MCF 10A (cell line): ENCODE measurements at regions of chr15 and their contacts with region 1.

Region 1: DNA sequence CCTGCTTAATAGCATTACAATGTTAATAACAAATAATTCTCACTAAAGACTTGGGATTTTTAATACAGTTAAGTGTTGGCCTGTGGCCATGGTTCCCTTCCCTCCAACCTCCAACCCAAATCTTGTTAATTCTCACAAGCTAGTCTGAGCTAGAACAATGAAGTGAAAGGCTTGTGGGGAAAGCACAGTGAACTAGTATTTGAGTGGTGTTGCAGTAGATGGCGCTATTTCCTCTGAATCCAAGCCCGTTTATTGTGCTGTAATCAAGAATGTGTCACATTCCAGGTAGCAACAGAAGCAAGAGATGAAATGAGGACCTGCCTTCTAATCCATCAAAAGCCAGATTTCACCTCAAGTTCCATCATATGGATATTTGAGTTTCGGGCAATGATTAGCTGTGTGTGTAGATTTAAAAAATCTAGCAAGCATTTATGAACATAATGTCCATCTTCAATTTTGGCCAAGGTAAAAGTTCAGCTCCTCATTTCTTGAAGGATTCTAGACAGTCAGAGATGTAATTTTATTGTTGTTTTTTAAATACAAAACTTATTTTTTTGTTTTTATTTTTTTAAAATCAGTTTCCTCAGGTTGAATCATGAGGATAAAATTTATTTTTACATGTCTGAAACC is 160.7 kb downstream of the SQOR start:
- DNase-seq: peak; percentile 70
- H3K4me3 Mint-ChIP-seq: no peak overlapping the region
- H3K27ac Mint-ChIP-seq: no peak overlapping the region
- H3K4me1 Mint-ChIP-seq: peaks cover 5% of the 10 kb centered on the region
- H3K27me3 Mint-ChIP-seq: peaks cover 27% of the 10 kb centered on the region
- CTCF ChIP-seq: peak; percentile 67

Region 2: DNA sequence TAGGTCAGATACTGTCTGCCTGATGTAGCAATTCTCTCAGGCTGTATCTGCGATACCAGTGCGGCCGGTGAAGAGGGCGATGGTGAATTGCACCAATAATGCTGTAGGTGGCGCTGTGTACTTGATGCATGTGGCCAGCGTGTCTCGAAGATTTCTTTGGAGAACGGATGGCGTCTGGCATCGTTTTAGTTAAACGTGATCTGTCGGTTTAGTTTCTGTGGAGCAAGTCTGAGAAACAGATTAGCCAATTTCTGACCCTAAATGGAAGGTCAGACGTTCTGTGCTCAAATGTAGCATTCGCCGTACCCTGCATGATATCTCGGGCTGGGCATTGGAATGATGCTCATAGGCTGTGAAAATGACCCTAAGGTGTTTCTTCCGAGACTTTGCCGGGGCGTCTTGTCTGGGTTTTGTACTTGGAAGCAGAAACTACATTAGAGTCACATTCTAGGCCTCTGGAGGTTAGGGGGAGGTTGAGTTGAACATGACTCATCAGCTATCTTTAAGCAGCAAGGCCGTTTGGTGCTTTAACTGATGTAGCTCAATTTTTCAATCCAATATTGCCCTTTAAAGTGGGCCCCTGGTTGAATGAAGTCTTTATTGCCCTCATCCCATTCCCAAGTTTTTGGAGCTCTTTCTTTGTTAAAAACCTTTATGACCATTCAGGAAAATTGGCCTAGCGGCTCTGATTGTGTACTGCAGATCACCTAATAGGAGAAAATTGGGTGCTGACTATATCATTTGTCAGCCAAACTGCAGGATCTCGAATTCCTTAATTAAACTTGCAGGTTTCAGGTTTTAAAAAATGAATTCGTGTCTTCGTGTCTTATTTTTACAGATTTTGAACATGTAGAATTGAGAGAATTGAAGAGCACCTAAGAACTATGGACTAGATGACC is 80.7 kb before region 1 on chr15:
- CTCF ChIA-PET with region 1: interaction called, 74 read pairs
- POLR2A ChIA-PET with region 1: no interaction called
- intact Hi-C with region 1: loop called (anchors 1 kb)
- DNase-seq: peak; percentile 75
- H3K4me3 Mint-ChIP-seq: no peak overlapping the region
- H3K27ac Mint-ChIP-seq: no peak overlapping the region
- H3K4me1 Mint-ChIP-seq: peaks cover 8% of the 10 kb centered on the region
- H3K27me3 Mint-ChIP-seq: peaks cover 24% of the 10 kb centered on the region
- CTCF ChIP-seq: peak; percentile 95

Region 3: GRCh38 chr15:45855907-45856579 is 60.5 kb after region 1 on chr15:
- CTCF ChIA-PET with region 1: interaction called, 17 read pairs
- POLR2A ChIA-PET with region 1: no interaction called
- intact Hi-C with region 1: no loop called
- DNase-seq: peak; percentile 46
- H3K4me3 Mint-ChIP-seq: peak overlapping the region; percentile 8
- H3K27ac Mint-ChIP-seq: peak overlapping the region; percentile 74
- H3K4me1 Mint-ChIP-seq: peaks cover 23% of the 10 kb centered on the region
- H3K27me3 Mint-ChIP-seq: no peaks in the 10 kb centered on the region
- CTCF ChIP-seq: no peak

Region 4: DNA sequence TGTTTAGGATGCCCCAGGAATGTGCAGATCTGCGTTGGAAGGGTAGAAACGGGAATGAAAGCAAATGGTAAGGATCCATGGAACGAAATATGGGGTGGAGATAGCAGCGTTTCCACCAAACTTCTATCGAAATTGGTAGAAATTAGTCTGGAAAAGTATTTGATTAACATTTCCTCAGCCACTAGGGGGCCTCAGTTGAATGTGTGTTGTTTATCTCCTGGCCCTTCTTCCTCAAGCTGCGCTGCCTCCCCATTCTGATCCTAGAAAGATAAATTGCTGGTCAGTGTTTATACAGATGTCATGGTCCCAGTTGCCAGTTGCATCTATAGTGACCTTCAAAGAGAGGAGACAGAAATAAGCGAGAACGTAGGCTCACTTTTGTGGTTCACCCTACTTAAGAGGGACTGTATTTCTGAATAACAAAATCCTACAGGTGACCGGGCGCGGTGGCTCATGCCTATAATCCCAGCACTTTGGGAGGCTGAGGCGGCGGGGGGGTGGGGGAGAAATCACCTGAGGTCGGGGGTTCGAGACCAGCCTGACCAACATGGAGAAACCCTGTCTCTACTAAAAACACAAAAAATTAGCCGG is 296.4 kb after region 1 on chr15:
- CTCF ChIA-PET with region 1: interaction called, 13 read pairs
- POLR2A ChIA-PET with region 1: interaction called, 3 read pairs
- intact Hi-C with region 1: loop called (anchors 2 kb)
- DNase-seq: peak; percentile 16
- H3K4me3 Mint-ChIP-seq: no peak overlapping the region
- H3K27ac Mint-ChIP-seq: no peak overlapping the region
- H3K4me1 Mint-ChIP-seq: no peaks in the 10 kb centered on the region
- H3K27me3 Mint-ChIP-seq: no peaks in the 10 kb centered on the region
- CTCF ChIP-seq: peak; percentile 67

Region 5: GRCh38 chr15:46280762-46281542 is 485.4 kb after region 1 on chr15:
- CTCF ChIA-PET with region 1: interaction called, 15 read pairs
- POLR2A ChIA-PET with region 1: no interaction called
- intact Hi-C with region 1: loop called (anchors 1 kb)
- DNase-seq: no peak
- H3K4me3 Mint-ChIP-seq: no peak overlapping the region
- H3K27ac Mint-ChIP-seq: no peak overlapping the region
- H3K4me1 Mint-ChIP-seq: no peaks in the 10 kb centered on the region
- H3K27me3 Mint-ChIP-seq: peaks cover 11% of the 10 kb centered on the region
- CTCF ChIP-seq: peak; percentile 16

Region 6: DNA sequence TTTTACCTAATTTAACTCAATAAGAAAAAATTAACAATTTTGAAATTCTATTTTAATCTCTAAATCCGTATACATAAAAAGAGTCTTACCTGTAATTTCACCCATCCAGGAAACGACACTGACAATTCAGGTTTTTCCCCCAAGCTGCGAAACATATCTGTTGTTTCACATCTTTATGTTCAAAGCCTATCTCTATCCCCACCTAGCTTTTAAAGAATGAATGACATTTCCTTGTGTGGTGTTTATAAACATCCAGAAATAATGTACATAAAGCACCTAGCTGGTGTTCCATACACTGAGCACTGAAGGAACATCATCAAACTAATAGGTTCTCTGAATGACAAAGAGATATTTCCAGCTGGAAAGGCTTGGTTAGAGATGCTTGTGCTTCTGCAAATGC is 707.1 kb after region 1 on chr15:
- CTCF ChIA-PET with region 1: interaction called, 21 read pairs
- POLR2A ChIA-PET with region 1: no interaction called
- intact Hi-C with region 1: loop called (anchors 1 kb)
- DNase-seq: no peak
- H3K4me3 Mint-ChIP-seq: no peak overlapping the region
- H3K27ac Mint-ChIP-seq: no peak overlapping the region
- H3K4me1 Mint-ChIP-seq: peaks cover 4% of the 10 kb centered on the region
- H3K27me3 Mint-ChIP-seq: no peaks in the 10 kb centered on the region
- CTCF ChIP-seq: peak; percentile 42